ENCODE measurements at regions of chr16 and their contacts with region 1.

Region 1: DNA sequence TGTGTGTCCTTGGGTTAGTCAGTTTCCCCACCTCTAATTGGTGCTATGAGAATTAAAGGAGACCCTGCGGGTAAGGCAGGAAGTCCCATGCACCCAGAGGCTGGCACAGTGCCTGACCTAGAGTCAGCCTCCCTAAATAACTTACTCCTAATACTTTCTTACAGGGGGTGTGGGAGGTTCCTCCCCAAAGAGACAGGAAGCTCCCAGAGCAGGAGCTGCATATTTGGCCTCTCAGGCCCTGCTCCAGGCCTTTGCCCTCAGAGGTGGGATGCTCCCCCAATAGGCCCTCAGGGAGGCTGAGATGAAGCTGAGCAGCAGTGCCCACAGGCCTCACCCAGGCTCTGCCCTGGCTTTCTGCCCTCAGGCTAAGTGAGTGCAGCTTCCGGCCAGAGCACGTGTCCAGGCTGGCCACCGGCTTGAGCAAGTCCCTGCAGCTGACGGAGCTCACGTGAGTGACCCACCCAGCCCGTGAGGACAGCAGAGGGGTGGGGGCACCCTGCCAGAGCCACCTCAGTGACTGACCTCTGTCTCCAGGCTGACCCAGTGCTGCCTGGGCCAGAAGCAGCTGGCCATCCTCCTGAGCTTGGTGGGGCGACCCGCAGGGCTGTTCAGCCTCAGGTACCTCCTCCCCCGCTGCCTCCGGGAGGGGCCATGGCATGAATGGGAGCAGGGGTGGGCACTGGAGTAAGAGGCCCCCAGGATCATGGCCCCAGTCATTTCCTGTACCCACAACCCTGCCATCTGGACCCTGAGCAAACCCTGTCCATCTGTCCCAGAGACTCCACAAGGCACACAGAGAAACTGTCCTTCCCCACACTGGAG is 31.1 kb upstream of the CPNE2 start:
- DNase-seq: no peak
- ATAC-seq: peak in 3 of 4 experiments; percentile 22 to 39 (median 38)
- H3K4me3 ChIP-seq: no peak overlapping the region
- H3K4me3 Mint-ChIP-seq: no peak overlapping the region
- H3K27ac ChIP-seq: no peak overlapping the region
- H3K27ac Mint-ChIP-seq: peak overlapping the region; percentile 61 to 85
- H3K4me1 ChIP-seq: peaks cover 0 to 26% of the 10 kb centered on the region in 2 experiments
- H3K4me1 Mint-ChIP-seq: peaks cover 19 to 33% (median 23%) of the 10 kb centered on the region in 3 donors
- H3K27me3 ChIP-seq: no peaks in the 10 kb centered on the region
- H3K27me3 Mint-ChIP-seq: no peaks in the 10 kb centered on the region

Region 2: GRCh38 chr16:56463153-56463552 is 598.1 kb before region 1 on chr16:
- CTCF ChIA-PET with region 1: no interaction called
- POLR2A ChIA-PET with region 1: interaction called in 1 of 2 experiments, 14 read pairs
- DNase-seq: no peak
- ATAC-seq: no peak
- H3K4me3 ChIP-seq: no peak overlapping the region
- H3K4me3 Mint-ChIP-seq: no peak overlapping the region
- H3K27ac ChIP-seq: no peak overlapping the region
- H3K27ac Mint-ChIP-seq: no peak overlapping the region
- H3K4me1 ChIP-seq: no peaks in the 10 kb centered on the region
- H3K4me1 Mint-ChIP-seq: peaks cover under 1 to 8% (median 6%) of the 10 kb centered on the region in 3 donors
- H3K27me3 ChIP-seq: no peaks in the 10 kb centered on the region
- H3K27me3 Mint-ChIP-seq: no peaks in the 10 kb centered on the region

Measured in T-cell (primary cell).